ENCODE measurements at regions of chr4 and their contacts with region 1.

Region 1: GRCh38 chr4:140851032-140851636 is 94.9 kb upstream of the TBC1D9 start:
- DNase-seq: peak; percentile 31 to 32
- H3K4me3 ChIP-seq: no peak overlapping the region
- H3K27ac ChIP-seq: no peak overlapping the region
- H3K4me1 ChIP-seq: no peaks in the 10 kb centered on the region
- H3K27me3 ChIP-seq: no peaks in the 10 kb centered on the region
- CTCF ChIP-seq: peak; percentile 33 to 93 (median 76)
- POLR2A ChIP-seq: no peak

Region 2: DNA sequence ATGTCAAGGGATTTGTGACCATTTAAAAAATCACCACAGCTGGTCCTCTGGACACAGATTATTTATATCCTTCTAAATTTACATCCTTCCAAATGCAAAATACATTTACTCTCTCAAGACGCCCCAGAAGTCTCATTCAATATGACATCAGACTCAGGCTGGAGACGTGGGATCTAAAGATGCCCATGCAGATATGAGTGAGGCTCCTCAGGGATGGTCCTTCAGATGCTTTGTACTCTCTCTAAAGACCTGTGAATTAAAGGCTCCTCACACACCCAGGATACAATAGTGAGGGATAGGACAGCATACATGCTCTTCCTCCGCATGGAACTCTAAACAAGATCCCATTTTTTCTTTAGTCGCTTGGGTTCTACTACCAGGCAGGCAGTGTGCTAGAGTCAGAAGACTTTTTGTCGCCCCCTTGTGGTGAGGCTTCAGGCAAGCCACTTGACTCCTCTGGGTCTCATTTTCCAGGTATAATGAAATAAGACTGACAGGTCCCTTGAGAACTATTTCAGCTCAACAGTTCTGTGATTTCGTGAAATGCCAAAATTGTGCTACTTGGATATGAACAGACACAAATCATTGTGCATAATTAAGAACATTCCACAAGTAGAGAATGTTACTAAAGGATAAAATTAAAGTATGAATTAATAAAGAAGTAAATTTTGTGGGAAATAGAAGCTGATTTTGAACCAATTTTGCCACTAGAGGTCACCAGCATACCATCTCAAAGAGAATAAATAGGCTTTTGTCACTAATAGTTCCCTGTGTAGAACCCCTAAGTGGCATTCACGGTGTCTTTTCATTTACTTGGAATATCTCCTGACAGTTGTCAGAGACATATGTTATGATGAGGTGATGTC is 491.3 kb before region 1 on chr4:
- intact Hi-C with region 1: loop called (anchors 10 kb)
- DNase-seq: peak; percentile 73 to 80
- H3K4me3 ChIP-seq: no peak overlapping the region
- H3K27ac ChIP-seq: no peak overlapping the region
- H3K4me1 ChIP-seq: no peaks in the 10 kb centered on the region
- H3K27me3 ChIP-seq: no peaks in the 10 kb centered on the region
- CTCF ChIP-seq: peak; percentile 40 to 82 (median 68)
- POLR2A ChIP-seq: no peak

Region 3: DNA sequence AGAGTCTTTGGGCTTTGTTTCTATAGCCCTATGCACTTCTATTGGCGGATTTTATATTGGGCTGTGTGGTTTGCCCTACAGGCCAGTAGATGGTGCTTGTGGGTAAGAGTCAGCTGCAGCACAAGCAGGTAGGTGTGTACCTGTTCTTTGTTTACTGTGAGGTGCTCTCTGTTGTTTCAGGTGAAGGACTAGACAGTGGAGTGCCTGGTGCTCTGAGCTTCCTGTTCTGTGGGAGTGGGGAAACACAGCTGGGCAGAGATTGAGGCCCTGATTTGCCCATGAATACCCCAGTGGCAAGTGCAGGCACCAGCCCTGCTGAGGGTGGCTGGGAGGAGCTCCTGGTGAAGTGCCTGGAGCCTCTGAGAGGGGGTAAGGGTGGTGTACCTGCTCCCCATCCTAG is 256.1 kb before region 1 on chr4:
- intact Hi-C with region 1: loop called (anchors 5 kb)
- DNase-seq: peak; percentile 37 to 42
- H3K4me3 ChIP-seq: no peak overlapping the region
- H3K27ac ChIP-seq: no peak overlapping the region
- H3K4me1 ChIP-seq: no peaks in the 10 kb centered on the region
- H3K27me3 ChIP-seq: no peaks in the 10 kb centered on the region
- CTCF ChIP-seq: peak; percentile 29 to 77 (median 68)
- POLR2A ChIP-seq: no peak

Region 4: GRCh38 chr4:141686146-141686775 is 835.1 kb after region 1 on chr4:
- intact Hi-C with region 1: no loop called
- DNase-seq: no peak
- H3K4me3 ChIP-seq: no peak overlapping the region
- H3K27ac ChIP-seq: no peak overlapping the region
- H3K4me1 ChIP-seq: no peaks in the 10 kb centered on the region
- H3K27me3 ChIP-seq: no peaks in the 10 kb centered on the region
- CTCF ChIP-seq: no peak
- POLR2A ChIP-seq: no peak